WTC11 (cell line): ENCODE measurements at regions of chr1 and their contacts with region 1.

Region 1: GRCh38 chr1:156728597-156729462 is at the start of gene ISG20L2:
- DNase-seq: peak; percentile 96
- ATAC-seq: peak; percentile 90
- H3K4me3 Mint-ChIP-seq: no peak within 1 kb of the TSS
- H3K27ac Mint-ChIP-seq: peak within 1 kb of the TSS; percentile 99
- H3K4me1 Mint-ChIP-seq: peaks cover 14% of the 10 kb centered on the region
- H3K27me3 Mint-ChIP-seq: no peaks in the 10 kb centered on the region
- CTCF ChIP-seq: no peak
- total RNA-seq, gene ISG20L2: 37.2 to 43.8 TPM (median 42.2 TPM) in 3 replicates

Region 2: GRCh38 chr1:156618853-156619581 is 109.8 kb before region 1 on chr1 and contains the start of gene HAPLN2:
- CTCF ChIA-PET with region 1: interaction called, 31 read pairs
- POLR2A ChIA-PET with region 1: no interaction called
- DNase-seq: peak; percentile 79
- ATAC-seq: peak; percentile 86
- H3K4me3 Mint-ChIP-seq: no peak within 1 kb of the TSS
- H3K27ac Mint-ChIP-seq: no peak within 1 kb of the TSS
- H3K4me1 Mint-ChIP-seq: peaks cover 7% of the 10 kb centered on the region
- H3K27me3 Mint-ChIP-seq: peaks cover 58% of the 10 kb centered on the region
- CTCF ChIP-seq: no peak
- total RNA-seq, gene HAPLN2: 1.1 to 1.3 TPM (median 1.2 TPM) in 3 replicates

Region 3: DNA sequence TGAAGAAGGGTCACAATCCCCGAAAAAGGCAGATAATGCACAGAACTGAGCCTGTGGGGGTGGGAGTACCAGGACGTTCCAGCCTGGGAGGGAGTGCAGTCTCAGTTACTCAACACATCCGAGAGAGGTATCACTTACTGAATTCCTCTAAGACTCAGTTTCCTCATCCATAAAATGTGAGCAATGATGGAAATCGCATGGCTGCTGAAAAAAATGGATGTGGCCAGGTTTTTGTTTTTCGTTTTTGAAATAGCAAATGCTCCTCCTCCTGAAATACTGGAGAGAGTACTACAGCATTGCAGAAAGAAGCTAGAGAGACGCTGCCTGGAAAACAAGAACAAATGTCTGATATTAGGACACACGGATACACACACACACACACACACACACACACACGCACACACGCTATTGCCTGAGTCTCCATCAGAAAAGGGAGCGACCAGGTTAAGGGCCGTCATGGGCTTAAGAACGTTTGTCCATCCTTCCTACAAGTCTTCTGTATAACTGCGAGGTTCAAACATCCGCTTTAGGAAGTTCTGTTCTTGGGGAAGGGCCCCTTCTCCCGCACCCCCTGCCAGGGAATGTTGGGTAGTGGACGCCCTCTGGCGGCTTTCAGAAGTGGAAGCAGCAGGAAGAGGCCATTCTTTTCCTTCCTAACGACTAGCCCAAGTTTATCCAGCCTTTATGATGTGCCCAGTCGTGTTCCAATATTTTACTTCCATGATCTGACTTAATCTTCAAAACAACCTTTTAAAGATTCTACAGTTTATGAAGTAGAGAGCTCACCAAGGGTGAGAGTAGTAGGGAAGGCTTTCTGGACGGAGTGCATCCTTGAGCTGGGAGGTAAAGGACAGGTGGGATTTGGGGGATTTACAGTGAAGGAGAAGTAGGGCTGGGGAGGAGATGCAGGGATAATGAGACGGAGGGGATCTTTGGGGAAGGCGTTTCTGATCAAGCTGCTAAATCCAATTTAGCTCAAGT is 50.9 kb before region 1 on chr1:
- CTCF ChIA-PET with region 1: interaction called, 62 read pairs
- POLR2A ChIA-PET with region 1: interaction called, 10 read pairs
- DNase-seq: peak; percentile 77
- ATAC-seq: peak; percentile 2
- H3K4me3 Mint-ChIP-seq: peak overlapping the region; percentile 76
- H3K27ac Mint-ChIP-seq: peak overlapping the region; percentile 82
- H3K4me1 Mint-ChIP-seq: peaks cover 57% of the 10 kb centered on the region
- H3K27me3 Mint-ChIP-seq: peaks cover 34% of the 10 kb centered on the region
- CTCF ChIP-seq: peak; percentile 76

Region 4: DNA sequence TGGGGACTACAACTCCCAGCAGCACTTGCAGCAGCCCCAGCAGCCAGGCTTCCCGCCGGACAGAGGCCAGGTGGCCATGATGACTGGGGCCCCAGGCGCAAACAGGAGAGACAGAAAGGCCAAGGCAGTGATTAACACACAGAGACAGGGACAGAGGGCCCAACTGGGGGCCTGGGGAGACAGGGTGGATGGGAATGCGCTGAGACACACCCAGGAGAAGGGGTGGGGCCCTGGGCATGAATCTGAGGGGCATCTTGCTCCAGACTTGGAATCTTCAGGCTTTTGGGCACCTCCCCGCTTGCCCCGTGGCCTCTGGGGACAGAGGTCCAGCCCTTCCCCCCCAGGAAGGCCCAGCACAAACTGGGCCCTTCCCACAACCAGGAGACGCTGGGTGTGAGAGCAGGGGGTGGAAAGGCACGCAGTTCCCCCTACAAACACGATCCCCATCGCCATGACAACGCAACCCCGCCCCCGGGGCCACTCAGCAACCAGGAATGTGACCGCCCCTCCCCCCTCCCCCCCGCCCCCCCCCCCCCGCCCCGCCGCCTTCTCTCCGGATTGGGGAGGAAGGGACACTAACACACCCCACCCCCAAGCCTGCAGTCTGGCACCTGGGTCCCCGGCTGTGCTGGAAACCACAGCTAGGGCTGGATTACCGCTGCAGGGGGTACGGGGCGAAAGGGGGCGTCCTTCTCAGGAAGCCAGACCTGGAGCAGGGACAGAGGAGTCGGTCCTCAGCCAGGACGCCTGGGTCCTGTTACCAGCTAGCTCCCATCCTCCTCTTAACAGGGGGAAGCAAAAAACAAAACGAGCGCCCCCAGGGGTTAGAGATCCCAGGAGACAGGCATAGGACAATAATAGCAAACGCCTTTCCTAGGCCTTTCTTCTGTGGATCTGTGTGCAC is 18.1 kb after region 1 on chr1:
- CTCF ChIA-PET with region 1: interaction called, 43 read pairs
- POLR2A ChIA-PET with region 1: interaction called, 14 read pairs
- DNase-seq: peak; percentile 95
- ATAC-seq: peak; percentile 66
- H3K4me3 Mint-ChIP-seq: peak overlapping the region; percentile 94
- H3K27ac Mint-ChIP-seq: peak overlapping the region; percentile 100
- H3K4me1 Mint-ChIP-seq: peaks cover 54% of the 10 kb centered on the region
- H3K27me3 Mint-ChIP-seq: no peaks in the 10 kb centered on the region; the same call in 1 of the 2 replicates
- CTCF ChIP-seq: no peak

Region 5: DNA sequence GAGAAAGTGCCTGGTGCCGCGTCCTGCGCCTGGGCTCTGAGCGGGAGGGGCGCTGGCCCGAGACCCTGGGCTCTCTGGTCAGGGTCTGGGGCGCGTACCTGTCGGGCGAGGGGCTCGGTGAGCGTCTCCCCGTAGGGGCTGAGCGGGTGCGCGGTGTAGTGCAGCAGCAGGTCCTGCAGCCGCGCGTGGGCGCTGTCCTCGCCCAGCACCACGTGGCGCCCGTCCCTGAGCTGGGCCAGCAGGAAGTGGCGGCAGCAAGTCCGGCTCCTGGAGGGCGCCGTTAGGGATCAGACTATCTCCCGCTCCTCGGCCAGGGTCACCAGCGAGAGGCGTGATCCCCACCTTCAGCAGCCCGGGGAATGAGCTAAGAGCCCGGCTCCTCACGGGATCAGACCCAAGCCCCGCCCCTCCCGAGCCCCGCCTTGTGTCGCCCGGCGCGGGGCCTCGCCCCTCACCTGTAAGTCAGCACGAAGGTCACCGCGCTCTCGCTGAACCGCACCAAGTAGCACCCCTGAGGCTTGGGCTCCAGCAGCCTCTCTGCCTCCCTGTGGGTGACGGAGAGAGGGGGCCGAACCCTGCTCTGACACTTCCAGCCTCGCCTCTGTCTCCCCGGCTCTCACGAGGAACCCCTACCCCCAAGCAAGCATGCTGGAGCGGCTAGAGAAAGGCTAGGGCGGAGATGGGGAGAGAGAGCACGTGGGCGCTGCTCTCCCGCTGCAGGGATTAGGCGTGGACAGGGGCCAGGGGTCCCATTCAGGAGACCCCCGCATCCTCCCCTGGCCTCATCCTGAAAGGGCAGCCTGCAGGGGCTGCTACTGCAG is 85.1 kb after region 1 on chr1:
- CTCF ChIA-PET with region 1: interaction called, 14 read pairs
- POLR2A ChIA-PET with region 1: no interaction called
- DNase-seq: peak; percentile 87
- ATAC-seq: peak; percentile 88
- H3K4me3 Mint-ChIP-seq: peak overlapping the region; percentile 62
- H3K27ac Mint-ChIP-seq: no peak overlapping the region
- H3K4me1 Mint-ChIP-seq: peaks cover 22% of the 10 kb centered on the region
- H3K27me3 Mint-ChIP-seq: peaks cover 59% of the 10 kb centered on the region
- CTCF ChIP-seq: no peak

Region 6: GRCh38 chr1:156892190-156893047 is 163.6 kb after region 1 on chr1:
- CTCF ChIA-PET with region 1: interaction called, 44 read pairs
- POLR2A ChIA-PET with region 1: interaction called, 3 read pairs
- DNase-seq: peak; percentile 96
- ATAC-seq: peak; percentile 78
- H3K4me3 Mint-ChIP-seq: peak overlapping the region; percentile 72
- H3K27ac Mint-ChIP-seq: no peak overlapping the region
- H3K4me1 Mint-ChIP-seq: peaks cover 24% of the 10 kb centered on the region
- H3K27me3 Mint-ChIP-seq: peaks cover 76% of the 10 kb centered on the region
- CTCF ChIP-seq: peak; percentile 72

Region 7: GRCh38 chr1:157073944-157074767 is 345.3 kb after region 1 on chr1:
- CTCF ChIA-PET with region 1: no interaction called
- POLR2A ChIA-PET with region 1: no interaction called
- DNase-seq: peak; percentile 83
- ATAC-seq: peak; percentile 67
- H3K4me3 Mint-ChIP-seq: no peak overlapping the region
- H3K27ac Mint-ChIP-seq: no peak overlapping the region
- H3K4me1 Mint-ChIP-seq: peaks cover 9% of the 10 kb centered on the region
- H3K27me3 Mint-ChIP-seq: peaks cover 11% of the 10 kb centered on the region
- CTCF ChIP-seq: peak; percentile 46; the same call in 1 of the 2 replicates